Psoas muscle (tissue), 8 donors: ENCODE measurements at regions of chr1 and their contacts with region 1.

Region 1: GRCh38 chr1:3491291-3492246 is 37.1 kb downstream of the ARHGEF16 start:
- DNase-seq: peak; percentile 77 to 88
- ATAC-seq: peak; percentile 80 to 95 (median 90)
- H3K4me3 ChIP-seq: no peak overlapping the region
- H3K27ac ChIP-seq: no peak overlapping the region
- H3K4me1 ChIP-seq: no peaks in the 10 kb centered on the region
- H3K27me3 ChIP-seq: peaks cover 0 to 2% (median 0%) of the 10 kb centered on the region in 3 donors
- CTCF ChIP-seq: peak; percentile 100

Region 2: GRCh38 chr1:3471302-3472087 is 20.1 kb before region 1 on chr1:
- intact Hi-C with region 1: no loop called
- DNase-seq: peak; percentile 38 to 59
- ATAC-seq: peak; percentile 79 to 92 (median 85)
- H3K4me3 ChIP-seq: no peak overlapping the region
- H3K27ac ChIP-seq: no peak overlapping the region
- H3K4me1 ChIP-seq: peaks cover 10% of the 10 kb centered on the region
- H3K27me3 ChIP-seq: no peaks in the 10 kb centered on the region
- CTCF ChIP-seq: peak; percentile 57

Region 3: DNA sequence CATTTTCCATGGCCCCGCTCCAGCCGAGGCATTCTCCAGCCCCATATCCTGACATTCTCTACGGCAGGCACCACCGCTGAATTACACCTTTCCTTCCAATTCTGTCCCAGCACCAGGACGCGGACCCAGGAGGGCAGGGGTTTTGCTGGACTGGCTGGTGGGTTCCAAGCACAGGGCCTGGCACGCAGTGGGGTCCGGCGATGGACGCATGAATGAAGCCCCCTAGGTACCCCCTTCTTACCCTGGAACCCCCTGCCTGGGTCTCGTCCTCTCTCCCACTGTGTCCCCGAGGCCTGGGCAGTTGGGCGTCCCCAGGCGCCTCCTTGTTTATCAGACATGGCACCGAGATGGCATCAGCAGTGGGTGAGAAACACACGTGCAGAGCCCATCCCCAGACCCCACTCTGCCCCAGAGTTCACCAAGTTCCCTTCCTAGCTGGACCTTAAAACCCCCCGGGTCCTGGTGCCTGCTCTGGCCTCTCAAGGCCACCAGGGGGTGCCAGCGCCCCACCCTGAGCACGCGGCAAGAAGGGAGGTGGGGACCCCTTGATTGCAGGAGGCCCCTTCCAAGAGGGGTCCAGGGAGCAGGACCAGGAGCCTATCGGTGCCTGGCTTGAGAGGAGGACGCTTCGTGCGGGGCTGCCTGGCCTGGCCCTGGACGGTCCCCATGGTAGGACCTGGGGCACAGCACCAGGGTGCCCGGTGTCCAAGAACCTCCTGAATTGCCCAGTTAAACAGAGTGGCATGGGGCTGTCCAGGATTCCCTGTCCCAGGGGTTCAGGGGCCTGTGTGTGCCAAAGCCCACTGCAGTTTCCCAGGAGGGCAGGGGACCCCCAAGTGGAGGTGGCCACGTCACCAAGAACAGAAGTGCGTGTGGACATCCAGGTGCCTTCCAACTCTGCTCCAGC is 73.6 kb after region 1 on chr1:
- intact Hi-C with region 1: loop called in 1 of 2 experiments (anchors 5 kb)
- DNase-seq: no peak
- ATAC-seq: peak; percentile 59 to 80 (median 65)
- H3K4me3 ChIP-seq: no peak overlapping the region
- H3K27ac ChIP-seq: no peak overlapping the region
- H3K4me1 ChIP-seq: no peaks in the 10 kb centered on the region
- H3K27me3 ChIP-seq: peaks cover 0 to 5% (median 0%) of the 10 kb centered on the region in 3 donors
- CTCF ChIP-seq: peak; percentile 86